Mammary epithelial cell (primary cell): ENCODE measurements at regions of chr1 and their contacts with region 1.

Region 1: DNA sequence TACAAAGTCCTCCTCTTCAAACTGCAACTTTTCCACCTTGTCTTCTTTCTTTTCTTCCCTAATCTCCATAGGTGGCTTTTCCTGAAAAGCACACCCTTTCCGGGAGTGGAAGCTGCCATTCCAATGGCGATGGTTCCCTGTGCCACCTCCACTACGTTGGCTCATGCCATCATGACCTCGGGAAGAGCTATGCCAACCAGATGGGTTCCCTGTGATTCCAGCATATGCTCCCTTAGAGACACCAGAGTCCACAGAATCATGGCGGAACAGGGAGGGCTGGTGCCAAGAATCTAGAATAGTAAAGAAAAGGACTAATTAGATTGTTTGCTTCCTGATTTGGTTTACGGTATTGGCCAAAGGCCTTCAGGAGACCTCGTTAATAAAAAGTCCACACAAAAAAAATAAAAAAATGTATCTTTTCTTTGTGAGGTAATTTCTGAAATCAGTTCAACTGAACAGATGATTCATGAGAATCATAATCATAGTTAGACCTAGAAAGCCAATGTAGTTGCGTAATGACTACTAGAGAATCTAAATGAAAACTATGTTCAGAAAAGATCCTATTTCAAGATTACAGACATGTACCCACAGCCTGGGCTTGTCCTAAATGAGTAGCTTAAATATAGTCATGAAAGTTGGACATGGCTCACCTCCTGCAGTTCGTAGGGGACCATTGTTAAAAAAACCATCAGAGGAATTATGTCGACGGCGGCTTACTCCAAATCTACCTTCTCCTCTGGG is 30.9 kb upstream of the CCDC17 start:
- DNase-seq: peak; percentile 74
- H3K4me3 ChIP-seq: no peak overlapping the region
- H3K27ac ChIP-seq: no peak overlapping the region
- H3K4me1 ChIP-seq: no peaks in the 10 kb centered on the region
- H3K27me3 ChIP-seq: no peaks in the 10 kb centered on the region
- CTCF ChIP-seq: no peak

Region 2: DNA sequence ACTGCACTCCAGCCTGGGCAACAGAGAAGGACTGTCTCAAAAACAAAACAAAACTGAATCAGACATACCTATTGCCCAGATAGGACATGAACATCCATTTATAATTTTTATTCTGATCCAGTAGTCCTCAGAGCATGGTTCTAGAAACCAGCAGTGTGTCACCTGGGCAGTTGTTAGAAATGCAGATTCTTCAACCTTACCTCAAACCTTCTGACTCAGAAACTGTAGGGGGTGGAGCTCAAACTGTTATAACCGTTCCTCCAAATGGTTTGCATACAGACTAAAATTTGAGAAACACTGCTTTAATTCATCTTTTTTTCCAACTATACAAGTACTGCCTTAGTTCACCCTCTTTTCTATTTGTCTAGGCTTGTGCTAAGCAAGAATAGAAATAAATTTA is 64.8 kb before region 1 on chr1:
- CTCF ChIA-PET with region 1: interaction called, 14 read pairs
- dilution Hi-C with region 1: no loop called
- in situ Hi-C with region 1: no loop called
- intact Hi-C with region 1: no loop called
- DNase-seq: no peak
- H3K4me3 ChIP-seq: no peak overlapping the region
- H3K27ac ChIP-seq: no peak overlapping the region
- H3K4me1 ChIP-seq: peaks cover 14% of the 10 kb centered on the region
- H3K27me3 ChIP-seq: no peaks in the 10 kb centered on the region
- CTCF ChIP-seq: no peak